Endothelial cell of umbilical vein (primary cell): ENCODE measurements at regions of chr20 and their contacts with region 1.

Region 1: GRCh38 chr20:7926767-7927166 is 13.5 kb downstream of the HAO1 start:
- DNase-seq: peak; percentile 75
- H3K4me3 ChIP-seq: no peak overlapping the region
- H3K27ac ChIP-seq: peak overlapping the region; percentile 92
- H3K4me1 ChIP-seq: peaks cover 26% of the 10 kb centered on the region
- H3K27me3 ChIP-seq: no peaks in the 10 kb centered on the region
- CTCF ChIP-seq: peak; percentile 47 to 52
- POLR2A ChIP-seq: no peak

Region 2: DNA sequence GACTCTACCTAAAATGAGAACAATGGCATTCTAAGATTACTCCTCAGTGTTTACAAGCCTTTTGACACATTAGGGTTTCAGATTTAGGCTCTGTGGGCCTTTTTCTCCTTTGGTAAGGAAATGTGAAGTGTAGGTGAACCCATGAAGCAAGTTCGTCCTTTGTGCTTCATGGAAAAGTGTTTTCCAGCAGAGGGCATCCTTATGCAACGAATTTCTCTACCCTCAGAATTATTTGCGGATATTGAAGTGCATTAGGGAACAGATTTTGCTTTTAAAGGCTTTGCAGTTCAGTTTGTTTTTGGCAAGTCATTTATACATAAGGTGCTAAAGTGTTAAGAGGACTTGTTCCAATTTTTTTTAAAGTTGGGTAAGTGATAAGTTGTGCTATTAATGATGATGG is 1748.2 kb before region 1 on chr20:
- CTCF ChIA-PET with region 1: no interaction called
- POLR2A ChIA-PET with region 1: no interaction called
- dilution Hi-C with region 1: no loop called
- intact Hi-C with region 1: loop called (anchors 2 kb)
- DNase-seq: peak; percentile 67
- H3K4me3 ChIP-seq: no peak overlapping the region
- H3K27ac ChIP-seq: no peak overlapping the region
- H3K4me1 ChIP-seq: no peaks in the 10 kb centered on the region
- H3K27me3 ChIP-seq: peaks cover 0 to 2% of the 10 kb centered on the region in 2 experiments
- CTCF ChIP-seq: peak; percentile 29 to 36
- POLR2A ChIP-seq: no peak

Region 3: GRCh38 chr20:6708010-6708409 is 1218.8 kb before region 1 on chr20:
- CTCF ChIA-PET with region 1: no interaction called
- POLR2A ChIA-PET with region 1: no interaction called
- dilution Hi-C with region 1: no loop called
- intact Hi-C with region 1: loop called (anchors 5 kb)
- DNase-seq: peak; percentile 91
- H3K4me3 ChIP-seq: no peak overlapping the region
- H3K27ac ChIP-seq: peak overlapping the region; percentile 11
- H3K4me1 ChIP-seq: peaks cover 68% of the 10 kb centered on the region
- H3K27me3 ChIP-seq: no peaks in the 10 kb centered on the region
- CTCF ChIP-seq: no peak
- POLR2A ChIP-seq: no peak

Region 4: GRCh38 chr20:7113577-7114466 is 812.9 kb before region 1 on chr20:
- CTCF ChIA-PET with region 1: interaction called, 5 read pairs
- POLR2A ChIA-PET with region 1: no interaction called
- dilution Hi-C with region 1: no loop called
- intact Hi-C with region 1: loop called (anchors 5 kb)
- DNase-seq: peak; percentile 53
- H3K4me3 ChIP-seq: no peak overlapping the region
- H3K27ac ChIP-seq: no peak overlapping the region
- H3K4me1 ChIP-seq: no peaks in the 10 kb centered on the region
- H3K27me3 ChIP-seq: no peaks in the 10 kb centered on the region
- CTCF ChIP-seq: peak; percentile 53 to 68
- POLR2A ChIP-seq: no peak

Region 5: GRCh38 chr20:7459083-7459482 is 467.7 kb before region 1 on chr20:
- CTCF ChIA-PET with region 1: no interaction called
- POLR2A ChIA-PET with region 1: no interaction called
- dilution Hi-C with region 1: no loop called
- intact Hi-C with region 1: loop called (anchors 5 kb)
- DNase-seq: peak; percentile 80
- H3K4me3 ChIP-seq: peak overlapping the region in 1 of 3 experiments; percentile 41
- H3K27ac ChIP-seq: peak overlapping the region; percentile 0
- H3K4me1 ChIP-seq: peaks cover 9% of the 10 kb centered on the region
- H3K27me3 ChIP-seq: no peaks in the 10 kb centered on the region
- CTCF ChIP-seq: no peak
- POLR2A ChIP-seq: no peak

Region 6: DNA sequence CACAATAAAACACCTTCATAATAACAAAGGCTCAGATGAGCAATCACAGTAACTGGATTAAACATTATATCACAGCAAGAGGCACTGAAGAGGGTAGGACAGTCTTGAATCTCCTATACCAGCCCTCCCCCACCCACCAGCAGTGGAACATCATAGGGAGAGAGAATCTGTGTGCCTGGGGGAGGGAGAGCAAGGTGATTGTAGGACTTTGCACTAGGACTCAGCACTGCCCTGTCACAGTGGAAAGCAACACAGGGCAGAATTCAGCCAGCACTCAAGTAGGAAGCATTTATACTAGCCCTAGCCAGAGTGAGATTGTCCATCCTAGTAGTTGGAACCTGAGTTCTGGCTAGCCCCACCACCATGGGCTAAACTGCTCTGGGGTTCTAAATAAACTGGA is 386.7 kb before region 1 on chr20:
- CTCF ChIA-PET with region 1: no interaction called
- POLR2A ChIA-PET with region 1: no interaction called
- dilution Hi-C with region 1: no loop called
- intact Hi-C with region 1: no loop called
- DNase-seq: no peak
- H3K4me3 ChIP-seq: no peak overlapping the region
- H3K27ac ChIP-seq: no peak overlapping the region
- H3K4me1 ChIP-seq: no peaks in the 10 kb centered on the region
- H3K27me3 ChIP-seq: no peaks in the 10 kb centered on the region
- CTCF ChIP-seq: no peak
- POLR2A ChIP-seq: no peak

Region 7: DNA sequence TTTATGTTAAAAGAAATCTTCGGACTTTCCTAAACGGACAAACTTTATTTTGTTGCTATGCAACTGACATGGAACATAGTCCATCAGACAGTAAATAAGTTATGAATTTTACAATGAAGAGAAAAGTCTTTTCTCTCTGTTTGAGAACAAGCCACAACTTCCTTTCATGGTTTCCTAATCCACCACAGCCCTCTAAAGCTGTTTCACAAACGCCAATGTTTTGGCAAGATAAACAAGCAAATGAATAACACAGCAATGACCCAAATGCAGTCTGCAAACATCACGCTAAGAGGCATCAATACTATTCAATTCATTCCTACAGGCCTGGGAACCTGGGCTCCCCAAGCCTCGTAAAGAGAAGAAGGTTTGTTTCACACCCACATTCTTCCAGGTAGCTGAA is 46.9 kb before region 1 on chr20:
- CTCF ChIA-PET with region 1: no interaction called
- POLR2A ChIA-PET with region 1: no interaction called
- dilution Hi-C with region 1: no loop called
- intact Hi-C with region 1: no loop called
- DNase-seq: no peak
- H3K4me3 ChIP-seq: no peak overlapping the region
- H3K27ac ChIP-seq: no peak overlapping the region
- H3K4me1 ChIP-seq: no peaks in the 10 kb centered on the region
- H3K27me3 ChIP-seq: no peaks in the 10 kb centered on the region
- CTCF ChIP-seq: no peak
- POLR2A ChIP-seq: no peak

Region 8: DNA sequence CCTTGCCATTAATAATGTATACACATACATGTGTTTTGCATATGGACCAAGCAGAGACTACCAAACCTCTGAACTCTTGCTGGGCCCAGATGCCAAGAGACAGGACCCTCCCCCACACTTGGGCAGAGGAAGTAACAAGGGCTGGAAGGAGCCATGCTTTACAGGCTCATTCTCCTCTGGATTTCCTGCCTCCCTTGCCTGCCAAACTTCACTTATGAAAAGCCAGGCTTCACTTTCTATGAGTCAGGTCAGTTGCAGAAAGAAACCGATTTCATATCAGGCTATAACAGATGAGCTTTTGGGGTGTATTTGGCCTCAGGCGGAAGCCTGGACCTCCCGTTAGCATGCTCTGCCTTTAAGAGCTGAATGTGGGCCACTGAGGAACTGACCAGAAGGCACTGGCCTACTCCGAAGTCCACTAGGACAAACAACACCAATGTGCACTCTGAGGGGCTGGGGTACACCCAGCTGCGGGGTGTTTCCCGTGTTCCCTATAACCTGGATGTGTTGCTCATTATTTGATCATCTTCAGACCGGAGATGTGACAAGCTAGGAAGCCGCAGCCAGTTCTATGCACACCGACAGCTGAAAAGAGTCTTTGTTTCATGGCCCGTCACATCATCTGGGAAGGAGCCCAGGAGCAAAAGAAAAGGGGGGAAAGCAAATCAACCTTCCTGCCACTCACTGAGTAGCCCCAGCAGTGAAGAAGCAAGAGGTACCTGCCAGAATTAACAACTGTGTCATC is 15.0 kb before region 1 on chr20:
- CTCF ChIA-PET with region 1: interaction called, 5 read pairs
- POLR2A ChIA-PET with region 1: no interaction called
- dilution Hi-C with region 1: no loop called
- intact Hi-C with region 1: loop called (anchors 1 kb)
- DNase-seq: peak; percentile 88
- H3K4me3 ChIP-seq: no peak overlapping the region
- H3K27ac ChIP-seq: peak overlapping the region; percentile 56
- H3K4me1 ChIP-seq: peaks cover 17% of the 10 kb centered on the region
- H3K27me3 ChIP-seq: no peaks in the 10 kb centered on the region
- CTCF ChIP-seq: no peak
- POLR2A ChIP-seq: no peak

Region 9: GRCh38 chr20:8740265-8740664 is 813.5 kb after region 1 on chr20:
- CTCF ChIA-PET with region 1: no interaction called
- POLR2A ChIA-PET with region 1: no interaction called
- dilution Hi-C with region 1: no loop called
- intact Hi-C with region 1: no loop called
- DNase-seq: no peak
- H3K4me3 ChIP-seq: no peak overlapping the region
- H3K27ac ChIP-seq: no peak overlapping the region
- H3K4me1 ChIP-seq: no peaks in the 10 kb centered on the region
- H3K27me3 ChIP-seq: no peaks in the 10 kb centered on the region
- CTCF ChIP-seq: no peak
- POLR2A ChIP-seq: no peak